KBM-7 (cell line): ENCODE measurements at regions of chr12 and their contacts with region 1.

Region 1: GRCh38 chr12:63843721-63844390 is 644 bp upstream of the SRGAP1 start:
- DNase-seq: peak; percentile 93

Region 2: DNA sequence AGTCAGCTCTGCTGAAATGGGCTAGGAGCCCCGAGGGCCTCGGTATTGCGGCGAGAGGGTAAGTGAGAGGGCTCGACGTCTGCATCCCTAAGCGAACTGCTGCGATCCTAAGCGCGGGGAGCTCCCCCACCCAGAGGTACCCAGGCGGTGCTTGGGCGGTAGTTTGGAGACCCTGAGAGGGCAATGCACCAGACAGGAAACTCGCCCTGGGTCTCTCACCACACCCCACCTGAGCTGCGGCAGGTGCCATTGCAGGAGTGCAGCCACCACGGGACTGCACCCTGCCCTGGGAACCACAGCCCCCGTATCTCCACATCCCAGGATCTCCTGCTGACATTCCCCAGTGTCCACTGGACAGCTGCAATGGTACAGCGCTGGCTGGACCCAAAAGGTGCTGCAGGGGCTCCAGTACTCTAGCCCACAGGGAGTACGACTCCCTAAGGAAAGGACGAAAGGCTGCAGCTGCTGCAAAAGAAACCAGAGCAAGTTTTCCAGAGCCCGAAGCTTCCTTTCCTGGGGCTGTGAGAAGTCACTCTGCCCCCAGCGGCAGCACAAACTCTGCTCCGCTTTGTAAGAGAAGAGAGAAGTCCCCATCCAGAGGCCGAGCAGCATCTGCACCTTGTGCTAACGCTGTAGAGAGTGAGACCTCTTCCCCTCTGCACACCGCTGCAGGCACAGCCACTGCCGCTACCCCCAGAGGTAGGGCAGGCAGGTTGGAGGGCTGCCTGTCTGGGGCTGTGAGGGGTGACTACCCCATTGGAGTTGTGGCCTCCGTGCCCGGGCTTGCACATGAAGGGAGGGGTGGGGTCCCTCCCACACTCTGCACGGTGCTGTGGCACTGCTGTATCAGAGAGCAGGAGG is 1408.3 kb before region 1 on chr12:
- in situ Hi-C with region 1: loop called (anchors 25 kb)
- DNase-seq: peak; percentile 87

Region 3: DNA sequence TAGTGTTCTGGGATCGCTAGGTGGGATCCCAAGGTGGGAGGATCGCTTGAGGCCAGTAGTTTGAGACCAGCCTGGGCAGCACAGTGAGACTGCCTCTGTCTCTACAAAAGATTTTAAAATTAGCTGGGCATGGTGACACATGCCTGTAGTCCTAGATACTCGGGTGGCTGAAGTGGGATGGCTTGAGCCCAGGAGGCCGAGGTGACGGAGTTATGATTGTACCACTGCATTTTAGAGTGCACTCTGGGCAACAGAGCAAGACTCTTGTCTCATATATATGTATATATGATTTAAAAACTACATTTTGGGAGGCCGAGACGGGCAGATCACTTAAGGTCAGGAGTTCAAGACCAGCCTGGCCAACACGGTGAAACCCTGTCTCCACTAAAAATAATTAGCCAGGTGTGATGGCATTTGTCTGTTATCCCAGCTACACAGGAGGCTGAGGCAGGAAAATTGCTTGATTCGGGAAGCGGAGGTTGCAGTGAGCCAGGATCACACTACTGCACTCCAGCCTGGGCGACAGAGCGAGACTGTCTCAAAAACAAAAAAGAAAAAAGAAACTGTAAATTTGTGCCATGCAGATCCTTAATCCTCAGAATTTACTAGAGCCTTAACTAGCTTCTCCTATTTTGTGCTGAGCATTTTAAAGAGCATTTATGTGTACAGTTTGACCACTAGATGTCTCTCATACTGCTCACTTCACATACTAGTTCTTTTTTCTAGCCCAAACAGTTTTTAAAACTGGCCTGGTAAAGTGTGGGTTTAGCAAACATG is 1262.4 kb before region 1 on chr12:
- in situ Hi-C with region 1: loop called (anchors 25 kb)
- DNase-seq: peak; percentile 74

Region 4: DNA sequence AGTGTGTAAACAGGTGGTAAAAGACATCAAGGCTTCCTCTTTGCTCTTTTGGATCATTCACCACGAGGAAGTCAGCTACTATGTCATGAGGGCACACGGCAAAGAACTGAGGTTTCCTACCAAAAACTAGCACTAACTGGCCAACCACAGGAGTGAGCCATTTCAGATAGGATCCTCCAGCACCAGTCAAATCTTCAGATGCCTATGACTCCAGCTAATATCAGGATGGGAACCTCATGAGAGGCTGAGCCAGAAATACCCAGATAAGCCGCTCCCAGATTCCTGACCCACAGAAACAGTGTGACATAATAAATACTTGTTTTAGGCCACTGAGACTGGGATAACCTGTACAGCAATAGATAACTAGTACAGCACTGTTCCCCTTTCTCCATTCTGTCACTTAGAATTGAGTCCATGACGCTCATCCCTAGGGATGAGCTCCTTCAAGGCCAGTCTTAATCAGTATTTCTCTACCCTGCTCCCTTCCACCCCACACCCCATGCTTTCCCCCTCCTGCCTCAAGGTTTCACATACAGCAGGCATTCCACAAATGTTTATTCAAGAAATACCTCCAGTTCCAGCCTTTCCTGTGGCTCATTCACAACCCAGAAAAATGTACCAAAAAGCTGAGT is 977.3 kb before region 1 on chr12:
- in situ Hi-C with region 1: loop called (anchors 10 kb)
- DNase-seq: no peak